Vagina (tissue), 2 donors: ENCODE measurements at regions of chr3 and their contacts with region 1.

Region 1: DNA sequence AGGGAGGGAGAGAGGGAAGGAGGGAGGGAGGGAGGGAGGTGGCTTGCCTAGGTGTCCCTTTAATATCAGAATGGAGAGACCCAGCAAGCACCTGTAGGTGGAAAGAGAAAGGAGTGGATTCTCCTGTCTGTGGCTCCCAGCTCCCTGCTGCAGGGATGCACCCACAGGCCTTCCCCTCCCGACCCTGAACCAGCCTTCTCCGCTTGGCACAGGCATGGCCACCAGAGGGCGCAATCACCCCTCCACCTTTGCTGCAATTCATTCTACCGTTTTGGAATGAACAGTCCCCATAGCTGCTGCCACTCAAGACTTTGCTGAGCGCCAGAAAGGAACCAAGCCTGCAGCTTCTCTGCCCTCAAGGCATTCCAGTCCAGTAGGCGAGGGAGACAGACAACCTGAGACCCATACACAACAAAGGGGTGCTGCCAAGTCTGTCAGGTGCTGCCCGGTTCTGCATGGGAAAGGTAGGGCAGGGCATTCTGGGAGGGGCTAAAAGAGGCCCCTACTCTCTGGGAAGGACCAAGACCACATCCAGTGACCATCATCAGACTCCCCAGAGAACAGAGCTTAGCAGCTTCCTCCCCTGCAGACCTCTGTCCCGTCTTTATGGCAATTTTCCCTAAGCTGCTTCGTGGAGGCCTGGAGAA is 4.9 kb downstream of the TLR9 start:
- DNase-seq: no peak
- H3K4me3 ChIP-seq: no peak overlapping the region
- H3K27ac ChIP-seq: no peak overlapping the region
- H3K4me1 ChIP-seq: peaks cover 46% of the 10 kb centered on the region
- H3K27me3 ChIP-seq: no peaks in the 10 kb centered on the region
- CTCF ChIP-seq: peak; percentile 67 to 91 (median 72)
- POLR2A ChIP-seq: no peak

Region 2: DNA sequence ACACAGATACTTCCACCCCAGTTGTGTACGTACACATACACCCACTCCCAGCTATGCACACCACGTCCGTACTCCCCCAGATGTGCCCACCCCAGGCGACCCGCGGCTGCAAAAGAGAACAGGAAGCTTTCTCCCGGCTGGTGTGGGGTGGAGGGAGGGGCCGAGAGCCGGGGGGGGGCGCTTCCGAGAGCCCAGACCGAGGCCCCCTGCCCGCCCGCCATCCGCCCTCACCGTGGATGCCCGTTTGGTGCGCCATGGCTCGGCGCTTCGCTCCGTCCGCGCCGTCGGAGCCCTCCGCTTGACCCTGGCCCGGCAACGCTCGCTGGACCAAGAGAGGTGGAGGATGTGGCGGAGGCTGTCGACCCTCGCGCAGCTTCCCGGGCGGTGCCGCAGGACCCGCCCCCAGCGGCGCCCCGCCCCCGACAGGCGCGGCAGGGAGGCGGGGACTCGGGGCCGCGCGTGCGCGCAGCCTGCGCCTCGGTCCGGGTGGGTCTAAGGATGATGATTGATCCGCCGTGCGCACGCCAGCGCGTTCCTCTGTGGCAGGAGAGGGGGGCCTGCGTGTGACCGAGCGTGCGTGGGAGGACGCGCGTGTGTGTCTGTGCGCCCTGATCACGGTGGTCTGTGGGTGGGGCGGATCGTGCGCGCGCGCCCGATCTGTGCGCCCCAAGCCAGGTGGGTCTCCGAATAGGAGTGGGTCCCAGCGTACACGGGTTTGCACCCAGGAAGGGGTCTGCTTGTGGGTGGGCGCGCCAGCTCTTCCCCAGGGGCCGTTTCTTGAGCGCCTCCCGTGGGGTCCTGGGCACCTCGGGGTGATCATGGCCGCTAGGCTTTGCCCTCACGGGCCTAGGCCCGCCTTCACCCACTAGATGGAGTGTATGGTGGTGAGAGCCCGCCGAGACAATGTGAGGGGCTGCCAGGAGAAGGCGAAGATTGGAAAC is 18.5 kb after region 1 on chr3 and contains the start of gene TWF2:
- intact Hi-C with region 1: no loop called
- DNase-seq: no peak
- H3K4me3 ChIP-seq: peak within 1 kb of the TSS; percentile 96 to 98
- H3K27ac ChIP-seq: peak within 1 kb of the TSS; percentile 98
- H3K4me1 ChIP-seq: peaks cover 66% of the 10 kb centered on the region
- H3K27me3 ChIP-seq: no peaks in the 10 kb centered on the region
- CTCF ChIP-seq: peak in 2 of 3 experiments; percentile 7 to 13
- POLR2A ChIP-seq: peak in 1 of 2 donors; percentile 85
- total RNA-seq, gene TWF2: 93.8 TPM

Region 3: DNA sequence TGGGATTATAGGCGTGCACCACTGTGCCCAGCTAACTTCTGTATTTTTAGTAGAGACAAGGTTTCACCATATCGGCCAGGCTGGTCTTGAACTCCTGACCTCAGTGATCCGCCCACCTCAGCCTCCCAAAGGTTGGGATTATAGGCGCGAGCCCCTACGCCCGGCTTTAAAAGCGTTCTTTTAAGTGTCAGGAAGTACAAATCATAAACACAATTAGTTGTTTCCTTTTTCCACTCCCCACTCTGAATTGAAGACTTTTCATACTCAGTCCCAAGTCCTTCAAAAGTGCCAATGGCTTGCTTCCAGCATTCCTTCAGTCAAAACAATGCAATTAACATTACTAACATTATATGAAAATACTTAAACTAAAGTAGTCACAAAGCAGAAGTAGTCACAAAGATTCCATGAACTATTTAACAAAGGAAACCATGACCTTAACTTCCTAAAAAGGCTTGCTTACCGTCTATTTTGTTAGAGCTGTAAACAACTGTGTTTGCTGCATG is 49.8 kb after region 1 on chr3:
- intact Hi-C with region 1: loop called (anchors 5 kb)
- DNase-seq: no peak
- H3K4me3 ChIP-seq: no peak overlapping the region
- H3K27ac ChIP-seq: peak overlapping the region; percentile 47
- H3K4me1 ChIP-seq: peaks cover 82% of the 10 kb centered on the region
- H3K27me3 ChIP-seq: no peaks in the 10 kb centered on the region
- CTCF ChIP-seq: no peak
- POLR2A ChIP-seq: no peak

Region 4: DNA sequence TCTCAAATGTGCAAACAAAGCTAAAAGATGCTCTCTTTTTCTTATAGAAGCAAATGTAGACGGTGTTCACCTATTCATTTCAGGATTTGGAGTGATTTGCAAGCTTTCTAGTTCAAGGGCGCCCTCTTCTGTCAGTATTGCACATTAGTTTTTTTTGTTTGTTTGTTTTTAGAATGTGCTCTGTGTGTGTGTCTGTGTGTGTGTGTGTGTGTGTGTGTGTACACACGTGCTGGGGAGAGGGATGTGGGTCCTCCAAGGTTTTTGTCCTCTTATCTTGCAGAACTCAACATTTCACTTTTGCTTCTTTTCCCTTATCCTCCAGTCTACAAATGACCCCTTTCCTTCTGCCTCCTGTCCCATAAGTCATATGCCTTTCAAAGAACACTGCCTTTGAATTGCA is 119.1 kb after region 1 on chr3:
- intact Hi-C with region 1: loop called (anchors 5 kb)
- DNase-seq: no peak
- H3K4me3 ChIP-seq: no peak overlapping the region
- H3K27ac ChIP-seq: no peak overlapping the region
- H3K4me1 ChIP-seq: no peaks in the 10 kb centered on the region
- H3K27me3 ChIP-seq: no peaks in the 10 kb centered on the region
- CTCF ChIP-seq: peak; percentile 41 to 83 (median 64)
- POLR2A ChIP-seq: no peak